HEK293T (cell line): ENCODE measurements at regions of chr19 and their contacts with region 1.

Region 1: DNA sequence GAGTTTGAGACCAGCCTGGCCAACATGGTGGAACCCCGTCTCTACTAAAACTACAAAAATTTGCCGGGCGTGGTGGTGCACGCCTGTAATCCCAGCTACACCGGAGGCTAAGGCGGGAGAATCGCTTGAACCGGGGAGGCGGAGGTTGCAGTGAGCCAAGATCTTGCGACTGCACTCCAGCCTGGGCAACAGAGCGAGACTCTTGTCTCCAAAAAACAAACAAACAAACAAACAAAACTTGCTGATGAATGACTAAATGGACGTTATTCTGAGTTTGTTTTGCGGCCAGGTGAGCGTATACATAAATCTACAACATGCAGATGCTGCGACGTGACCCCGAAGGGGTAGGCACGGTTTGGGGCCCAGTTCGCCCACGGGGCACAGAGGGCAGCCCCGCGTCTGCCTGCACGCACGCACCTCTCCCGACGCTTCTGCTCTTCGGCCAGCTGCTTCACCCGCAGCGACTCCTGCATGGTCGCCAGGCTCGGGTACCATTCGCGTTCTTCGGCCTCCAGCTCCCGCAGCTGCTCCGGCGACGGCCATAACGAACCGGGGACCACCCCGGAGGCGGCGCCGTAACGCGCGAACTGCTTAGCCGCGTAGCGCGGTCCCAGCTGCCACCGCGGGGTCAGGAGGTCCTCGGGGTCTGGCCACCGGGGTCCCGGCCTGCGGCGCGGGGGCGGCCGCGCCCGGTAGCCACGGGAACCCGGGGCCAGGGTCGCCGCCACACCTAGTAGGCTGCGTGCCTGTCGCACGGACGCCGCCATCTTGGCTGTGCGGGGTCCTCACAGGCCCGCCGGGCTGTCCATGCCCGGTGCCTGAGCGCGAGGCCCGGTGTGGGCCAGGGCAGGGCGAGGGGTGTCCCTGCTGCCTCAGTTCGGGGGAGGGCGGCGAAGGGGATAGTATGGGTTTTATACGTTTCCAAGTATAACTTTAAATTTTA is at the start of gene GADD45GIP1:
- DNase-seq: peak; percentile 86

Region 2: DNA sequence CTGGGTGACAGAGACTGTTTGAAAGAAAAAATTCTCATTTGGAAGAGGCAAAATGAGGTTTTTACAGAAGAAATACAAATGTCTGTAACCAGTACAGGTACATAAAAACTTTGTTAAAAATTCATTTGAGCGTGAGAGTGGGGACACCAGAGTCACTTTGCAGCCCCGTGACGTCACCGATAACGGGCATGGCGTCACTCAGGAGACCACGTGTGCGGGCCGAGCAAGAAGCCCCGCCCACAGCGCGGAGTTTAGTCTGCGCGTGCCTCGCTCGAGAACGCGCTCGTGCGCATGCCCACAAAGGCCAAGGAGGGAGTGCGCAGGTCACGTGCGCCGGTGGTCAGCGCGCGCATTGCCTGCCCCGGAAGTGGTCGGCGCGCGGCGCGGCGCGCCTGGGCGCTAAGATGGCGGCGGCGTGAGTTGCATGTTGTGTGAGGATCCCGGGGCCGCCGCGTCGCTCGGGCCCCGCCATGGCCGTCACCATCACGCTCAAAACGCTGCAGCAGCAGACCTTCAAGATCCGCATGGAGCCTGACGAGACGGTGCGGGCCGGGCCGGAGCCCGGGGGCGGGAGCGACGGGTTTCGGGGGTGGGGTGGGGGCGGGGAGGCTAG is 11.1 kb before region 1 on chr19 and contains the start of gene RAD23A:
- CTCF ChIA-PET with region 1: no interaction called
- POLR2A ChIA-PET with region 1: interaction called, 13 read pairs
- DNase-seq: peak; percentile 96